ENCODE measurements at regions of chr1 and their contacts with region 1.

Region 1: DNA sequence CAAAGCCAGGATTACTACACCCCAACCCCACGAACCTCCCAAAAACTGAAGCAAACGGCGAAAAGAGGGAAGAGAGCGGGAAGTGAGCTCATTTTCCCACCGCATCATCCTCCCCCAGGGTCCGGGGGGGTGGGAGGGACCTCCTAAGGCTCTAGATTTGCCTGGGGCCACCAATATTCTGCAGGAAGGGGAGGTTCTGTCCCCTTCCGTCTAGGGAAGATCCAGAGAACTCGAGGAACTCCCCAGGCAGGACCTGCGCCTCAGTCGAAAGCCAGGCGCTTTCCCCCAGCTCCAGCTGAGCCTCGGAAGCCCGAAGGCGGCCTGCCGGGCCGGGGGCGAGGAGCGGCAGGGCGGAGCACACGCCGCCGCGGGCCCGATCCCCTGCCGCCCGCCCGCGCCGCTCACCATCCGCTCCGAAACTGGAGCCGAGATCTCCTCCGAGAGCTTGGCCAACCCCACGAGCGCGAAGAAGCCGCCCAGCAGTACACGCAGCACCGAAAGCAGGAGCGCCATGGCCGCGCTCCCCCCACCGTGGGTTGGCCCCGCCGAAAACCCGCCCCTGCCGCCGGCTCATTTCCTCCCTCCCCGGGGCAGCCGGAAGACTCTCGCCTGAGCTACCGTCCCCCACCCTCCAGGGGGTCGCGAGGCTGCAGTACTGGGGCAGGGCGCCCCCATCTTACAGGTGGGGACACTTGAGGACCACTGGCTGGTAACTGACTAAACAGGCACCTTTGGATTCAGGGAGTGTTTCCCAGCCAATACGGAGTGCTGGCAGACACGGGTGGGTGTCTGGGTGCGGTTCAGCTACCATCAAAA is at the start of gene TMEM35B:
- DNase-seq: peak; percentile 64 to 88 (median 78)
- ATAC-seq: peak; percentile 97
- H3K4me3 ChIP-seq: peak within 1 kb of the TSS; percentile 65
- H3K4me3 Mint-ChIP-seq: peak within 1 kb of the TSS; percentile 97
- H3K27ac ChIP-seq: peak within 1 kb of the TSS; percentile 76 to 77
- H3K27ac Mint-ChIP-seq: peak within 1 kb of the TSS; percentile 87
- H3K4me1 ChIP-seq: peaks cover 41% of the 10 kb centered on the region
- H3K4me1 Mint-ChIP-seq: peaks cover 39% of the 10 kb centered on the region
- H3K27me3 ChIP-seq: no peaks in the 10 kb centered on the region
- H3K27me3 Mint-ChIP-seq: no peaks in the 10 kb centered on the region
- CTCF ChIP-seq: peak; percentile 33
- total RNA-seq, gene TMEM35B: 0.85 to 2.3 TPM

Region 2: DNA sequence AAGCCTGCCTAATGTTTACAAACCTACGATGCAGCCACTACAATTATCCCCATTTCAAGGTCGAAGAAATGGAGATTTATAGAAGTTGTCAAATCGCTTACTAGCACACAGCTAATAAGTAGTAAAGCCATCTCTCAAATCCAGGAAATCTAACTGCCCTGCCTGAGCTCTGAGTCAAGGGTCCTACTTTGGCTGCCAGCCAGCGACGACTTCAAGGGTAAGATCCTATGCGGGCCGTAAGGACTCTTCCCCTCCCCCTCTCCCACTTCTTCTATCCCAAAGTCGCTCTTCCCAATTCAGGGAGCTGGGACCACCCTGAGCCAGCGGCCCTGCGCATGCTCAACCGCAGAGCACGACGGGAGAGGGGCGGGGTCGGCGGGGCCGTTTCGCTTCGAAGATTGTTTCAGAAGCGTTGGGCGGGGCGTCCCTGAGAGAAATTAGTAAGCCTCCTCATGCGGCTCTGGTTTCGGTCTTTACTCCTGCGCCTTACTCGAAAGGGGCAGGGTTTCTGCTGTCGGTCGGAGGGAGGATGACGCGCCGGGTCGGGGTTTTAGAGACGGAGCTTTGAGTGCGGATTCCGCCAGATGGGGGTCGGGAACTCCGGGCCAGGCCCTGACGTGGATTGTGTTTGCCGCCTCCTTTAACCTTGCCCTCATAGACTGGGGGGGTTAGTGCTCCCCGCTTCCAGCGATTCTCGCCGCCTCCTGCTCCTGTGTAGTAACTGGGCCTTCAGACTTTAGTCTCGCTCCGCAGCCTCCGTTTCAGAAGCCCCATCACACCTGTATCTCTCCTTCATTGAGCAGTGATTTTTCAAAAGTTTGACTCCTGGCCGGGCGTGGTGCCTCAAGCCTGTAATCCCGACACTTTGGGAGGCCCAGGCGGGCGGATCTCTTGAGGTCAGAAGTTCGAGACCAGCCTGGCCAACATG is 94.3 kb after region 1 on chr1 and contains the start of gene ZMYM1:
- CTCF ChIA-PET with region 1: no interaction called
- POLR2A ChIA-PET with region 1: interaction called, 13 read pairs
- intact Hi-C with region 1: loop called in 1 of 2 experiments (anchors 5 kb)
- DNase-seq: peak; percentile 66 to 88 (median 76)
- ATAC-seq: peak; percentile 86
- H3K4me3 ChIP-seq: peak within 1 kb of the TSS; percentile 73
- H3K4me3 Mint-ChIP-seq: peak within 1 kb of the TSS; percentile 99
- H3K27ac ChIP-seq: peak within 1 kb of the TSS; percentile 75 to 86
- H3K27ac Mint-ChIP-seq: peak within 1 kb of the TSS; percentile 99
- H3K4me1 ChIP-seq: peaks cover 23% of the 10 kb centered on the region
- H3K4me1 Mint-ChIP-seq: peaks cover 39% of the 10 kb centered on the region
- H3K27me3 ChIP-seq: no peaks in the 10 kb centered on the region
- H3K27me3 Mint-ChIP-seq: peaks cover 9% of the 10 kb centered on the region
- CTCF ChIP-seq: no peak
- total RNA-seq, gene ZMYM1: 6.3 to 6.7 TPM

Region 3: DNA sequence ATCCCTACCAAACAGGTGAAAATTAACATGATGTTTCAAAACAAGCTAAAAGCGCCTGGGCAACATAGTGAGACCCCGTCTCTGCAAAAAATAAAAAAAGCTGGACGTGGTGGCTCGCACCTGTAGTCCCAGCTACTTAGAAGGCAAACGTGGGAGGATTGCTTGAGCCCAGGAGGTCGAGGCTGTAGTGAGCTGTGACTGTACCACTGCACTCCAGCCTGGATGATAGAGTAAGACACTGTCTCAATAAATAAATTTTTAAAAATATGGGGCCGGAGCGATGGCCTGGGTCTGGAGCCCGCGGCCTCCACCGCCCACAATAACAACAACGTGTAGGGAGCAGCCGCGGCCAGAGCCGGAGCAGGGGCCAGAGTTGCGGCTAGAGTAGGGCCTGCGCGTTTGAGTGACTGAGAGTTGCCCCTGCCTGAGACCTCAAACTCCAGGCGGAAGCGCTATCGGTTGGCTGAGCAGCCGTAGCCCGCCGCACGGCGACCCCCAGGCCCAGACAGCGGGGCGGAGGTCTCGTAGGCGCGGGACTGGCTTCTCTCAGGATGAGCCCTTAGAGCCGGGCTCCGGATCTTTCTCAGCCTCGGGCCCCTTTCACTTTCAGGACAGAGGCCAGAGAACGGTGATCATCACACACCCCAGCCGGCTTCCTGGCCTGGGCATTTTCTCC is 135.6 kb after region 1 on chr1:
- CTCF ChIA-PET with region 1: no interaction called
- POLR2A ChIA-PET with region 1: no interaction called
- intact Hi-C with region 1: no loop called
- DNase-seq: peak in 2 of 14 experiments; percentile 3 to 4
- ATAC-seq: no peak
- H3K4me3 ChIP-seq: peak overlapping the region; percentile 26
- H3K4me3 Mint-ChIP-seq: no peak overlapping the region
- H3K27ac ChIP-seq: no peak overlapping the region
- H3K27ac Mint-ChIP-seq: no peak overlapping the region
- H3K4me1 ChIP-seq: peaks cover 14% of the 10 kb centered on the region
- H3K4me1 Mint-ChIP-seq: peaks cover 10% of the 10 kb centered on the region
- H3K27me3 ChIP-seq: peaks cover 5 to 7% of the 10 kb centered on the region in 2 experiments
- H3K27me3 Mint-ChIP-seq: peaks cover 18% of the 10 kb centered on the region
- CTCF ChIP-seq: no peak

Region 4: DNA sequence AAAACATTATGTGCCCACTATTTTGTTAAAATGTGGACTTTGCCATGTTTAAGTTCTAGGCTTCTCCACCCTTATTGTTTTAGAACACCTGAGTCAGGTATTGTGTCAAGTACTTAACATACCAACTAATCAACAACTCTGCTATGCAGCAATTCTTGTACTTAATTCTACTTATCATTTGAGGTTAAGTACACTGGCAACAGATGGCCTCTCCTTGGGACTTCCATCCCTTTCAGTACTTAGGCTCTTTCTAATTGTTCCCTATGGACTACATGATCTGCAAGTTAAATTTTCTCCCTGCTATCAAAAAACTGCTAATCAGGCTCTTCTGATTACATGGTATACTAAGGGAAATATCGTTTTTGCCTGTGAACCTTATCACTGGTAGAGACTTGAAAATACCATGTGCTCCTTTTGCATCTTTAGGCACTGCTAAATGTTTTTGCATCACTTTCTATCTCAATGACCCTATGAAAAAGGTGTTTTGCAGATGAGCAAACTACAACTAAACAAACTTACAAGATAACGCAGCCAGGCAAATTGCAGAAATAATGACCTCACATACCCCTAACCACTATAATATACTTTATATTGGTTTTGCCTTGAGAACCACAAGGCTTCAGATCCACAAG is 189.0 kb after region 1 on chr1:
- CTCF ChIA-PET with region 1: no interaction called
- POLR2A ChIA-PET with region 1: no interaction called
- intact Hi-C with region 1: loop called in 1 of 2 experiments (anchors 10 kb)
- DNase-seq: no peak
- ATAC-seq: no peak
- H3K4me3 ChIP-seq: no peak overlapping the region
- H3K4me3 Mint-ChIP-seq: peak overlapping the region; percentile 0
- H3K27ac ChIP-seq: no peak overlapping the region
- H3K27ac Mint-ChIP-seq: peak overlapping the region; percentile 5
- H3K4me1 ChIP-seq: no peaks in the 10 kb centered on the region
- H3K4me1 Mint-ChIP-seq: peaks cover 9% of the 10 kb centered on the region
- H3K27me3 ChIP-seq: no peaks in the 10 kb centered on the region
- H3K27me3 Mint-ChIP-seq: no peaks in the 10 kb centered on the region
- CTCF ChIP-seq: no peak